K562 (cell line): ENCODE measurements at regions of chr7 and their contacts with region 1.

Region 1: DNA sequence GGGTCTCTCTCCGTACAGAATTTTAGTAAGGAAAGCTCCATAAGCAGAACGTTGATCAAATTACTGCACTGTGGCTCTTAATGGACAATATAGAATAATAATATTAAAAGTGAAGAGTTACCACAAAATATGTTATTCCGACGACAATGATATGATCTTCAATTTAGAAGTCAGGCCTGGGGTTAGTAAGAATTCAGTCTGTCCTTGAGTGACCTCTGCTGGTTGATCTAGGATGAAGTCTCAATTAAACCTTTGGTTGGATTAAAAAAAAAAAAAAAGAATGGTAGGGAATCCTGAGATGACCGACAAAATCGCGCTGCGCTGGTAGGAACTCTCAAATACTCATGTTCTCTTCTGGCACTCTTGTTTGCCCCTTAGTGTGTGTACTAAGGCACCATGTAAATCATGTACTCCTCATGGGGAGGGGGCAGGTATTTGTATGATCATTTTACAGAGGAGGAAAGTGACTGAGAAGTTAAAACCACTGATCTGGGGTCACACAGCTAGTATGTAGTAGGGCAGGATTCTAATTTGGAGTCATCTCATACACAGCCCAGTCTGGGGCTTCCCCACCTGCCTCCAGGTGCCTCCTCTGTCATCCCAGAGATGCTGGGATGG is 161.3 kb upstream of the NPVF start:
- DNase-seq: peak; percentile 24 to 31 (median 25)
- ATAC-seq: 0 out of 3 replicates have a peak, but pooled peaks have one; percentile 42
- H3K4me3 ChIP-seq: no peak overlapping the region
- H3K27ac ChIP-seq: no peak overlapping the region
- H3K4me1 ChIP-seq: no peaks in the 10 kb centered on the region
- H3K27me3 ChIP-seq: peaks cover 7 to 17% of the 10 kb centered on the region in 2 experiments
- CTCF ChIP-seq: peak in 2 of 3 experiments; percentile 40 to 67; a peak in 4 of 6 replicates
- EP300 ChIP-seq: no peak
- POLR2A ChIP-seq: no peak
- RAD21 ChIP-seq: peak; percentile 65 to 74

Region 2: DNA sequence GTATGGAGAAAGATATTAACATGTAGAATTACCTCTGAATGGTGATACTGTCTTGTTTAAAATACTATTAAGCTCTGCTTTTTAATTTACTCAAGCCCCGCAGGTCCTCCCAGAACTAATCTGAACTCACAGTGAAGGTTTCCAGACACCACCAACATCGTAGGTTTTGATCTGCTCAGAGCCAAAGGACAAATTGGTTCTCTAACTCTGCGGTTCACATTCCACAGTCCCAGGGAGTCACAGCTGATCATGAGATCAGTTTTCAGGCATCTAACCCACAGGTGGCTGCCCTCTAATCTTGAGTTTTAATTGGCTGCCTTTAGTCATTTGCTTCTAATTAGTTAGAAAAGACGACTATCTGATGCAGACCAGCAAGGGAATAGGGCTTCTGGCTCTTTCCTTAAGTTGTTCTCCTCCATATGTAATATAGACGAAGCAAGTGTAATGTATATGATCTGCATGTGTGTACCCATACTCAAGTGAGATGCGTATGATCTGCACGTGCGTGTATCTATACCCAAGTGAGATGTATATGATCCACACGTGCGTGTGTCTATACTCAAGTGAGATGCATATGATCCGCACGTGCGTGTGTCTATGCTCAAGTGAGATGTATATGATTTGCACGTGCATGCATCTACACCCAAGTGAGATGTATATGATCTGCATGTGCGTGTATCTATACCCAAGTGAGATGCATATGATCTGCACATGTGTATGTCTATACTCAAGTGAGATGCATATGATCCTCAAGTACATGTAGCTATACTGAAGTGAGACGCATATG is 170.2 kb after region 1 on chr7:
- CTCF ChIA-PET with region 1: interaction called, 185 read pairs
- POLR2A ChIA-PET with region 1: interaction called, 4 read pairs
- in situ Hi-C with region 1: loop called (anchors 5 kb)
- intact Hi-C with region 1: no loop called
- DNase-seq: no peak
- ATAC-seq: no peak
- H3K4me3 ChIP-seq: no peak overlapping the region
- H3K27ac ChIP-seq: no peak overlapping the region
- H3K4me1 ChIP-seq: no peaks in the 10 kb centered on the region
- H3K27me3 ChIP-seq: peaks cover 16 to 50% of the 10 kb centered on the region in 2 experiments; a peak in 4 of 5 replicates
- CTCF ChIP-seq: no peak
- EP300 ChIP-seq: no peak
- POLR2A ChIP-seq: no peak
- RAD21 ChIP-seq: no peak

Region 3: GRCh38 chr7:25565949-25566348 is 176.4 kb after region 1 on chr7:
- CTCF ChIA-PET with region 1: interaction called, 185 read pairs
- POLR2A ChIA-PET with region 1: interaction called, 4 read pairs
- in situ Hi-C with region 1: loop called (anchors 5 kb)
- intact Hi-C with region 1: loop called (anchors 1 kb)
- DNase-seq: peak; percentile 46 to 72 (median 64)
- ATAC-seq: no peak
- H3K4me3 ChIP-seq: no peak overlapping the region
- H3K27ac ChIP-seq: no peak overlapping the region
- H3K4me1 ChIP-seq: peaks cover 0 to 4% of the 10 kb centered on the region in 2 experiments; a peak in 1 of 5 replicates
- H3K27me3 ChIP-seq: peaks cover 4 to 38% of the 10 kb centered on the region in 2 experiments; a peak in 4 of 5 replicates
- CTCF ChIP-seq: peak; percentile 98 to 100 (median 100)
- EP300 ChIP-seq: no peak
- POLR2A ChIP-seq: no peak
- RAD21 ChIP-seq: peak; percentile 99